Breast epithelium (tissue), 4 donors: ENCODE measurements at regions of chr11 and their contacts with region 1.

Region 1: DNA sequence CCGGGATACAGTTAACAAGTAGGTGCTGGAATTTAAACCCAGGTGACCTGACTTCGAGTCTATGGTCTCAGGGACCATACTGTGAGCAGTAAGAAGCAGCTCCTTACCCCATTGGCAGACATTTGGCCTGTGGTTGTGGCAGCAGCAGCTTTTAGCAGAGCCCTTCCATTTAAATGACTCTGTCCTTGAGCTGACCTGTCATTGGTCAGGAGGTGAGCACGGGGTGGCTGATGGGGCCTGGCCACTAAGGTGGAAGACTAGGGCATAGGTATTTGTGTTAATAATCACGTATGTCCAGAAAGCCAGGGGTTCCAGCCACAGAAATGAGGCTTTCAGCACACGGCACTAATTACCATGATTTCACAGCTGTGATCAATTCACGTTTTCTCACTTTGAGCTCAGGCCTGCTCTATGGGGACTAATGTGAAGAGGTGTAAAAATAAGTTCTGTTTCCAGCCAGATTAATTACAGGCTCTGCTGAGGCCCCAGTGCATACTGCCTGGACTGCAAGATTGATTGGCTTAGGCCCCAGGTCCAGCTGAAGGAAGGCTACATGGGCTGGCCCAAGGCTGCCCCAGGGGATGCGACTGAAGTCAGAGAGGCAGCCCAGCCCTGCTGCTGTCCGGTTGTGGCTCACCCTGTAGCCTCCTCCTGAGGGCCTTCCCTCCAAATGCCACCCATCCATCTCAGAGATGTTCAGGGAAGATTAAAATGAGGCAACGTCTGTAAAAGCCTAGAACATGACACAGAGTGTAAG is 76.0 kb downstream of the FDX1 start:
- DNase-seq: no peak
- H3K4me3 ChIP-seq: no peak overlapping the region
- H3K27ac ChIP-seq: no peak overlapping the region
- H3K4me1 ChIP-seq: no peaks in the 10 kb centered on the region
- H3K27me3 ChIP-seq: no peaks in the 10 kb centered on the region
- CTCF ChIP-seq: no peak
- POLR2A ChIP-seq: no peak

Region 2: GRCh38 chr11:109747839-109748238 is 757.9 kb before region 1 on chr11:
- intact Hi-C with region 1: loop called (anchors 5 kb)
- DNase-seq: no peak
- H3K4me3 ChIP-seq: no peak overlapping the region
- H3K27ac ChIP-seq: no peak overlapping the region
- H3K4me1 ChIP-seq: no peaks in the 10 kb centered on the region
- H3K27me3 ChIP-seq: no peaks in the 10 kb centered on the region
- CTCF ChIP-seq: no peak
- POLR2A ChIP-seq: no peak

Region 3: DNA sequence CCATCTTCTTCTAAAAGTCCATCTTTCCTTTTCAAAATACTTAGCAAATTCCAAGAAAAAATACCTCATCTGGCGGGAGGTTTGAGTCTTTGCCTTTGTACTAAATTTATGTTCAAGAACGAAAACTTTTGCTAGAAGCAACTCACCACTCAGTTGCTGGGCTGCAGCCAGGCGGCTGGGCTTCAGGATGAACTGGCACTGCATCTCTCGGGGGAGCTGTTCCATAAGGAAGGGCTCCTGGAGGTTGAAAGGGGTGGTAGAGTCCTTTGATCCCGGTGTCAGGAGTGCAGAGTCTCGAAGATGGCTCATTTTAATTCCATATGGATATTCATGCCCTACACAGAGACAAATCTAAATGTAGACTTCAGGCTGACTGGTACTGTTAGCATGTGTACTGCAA is 100.7 kb after region 1 on chr11:
- intact Hi-C with region 1: loop called (anchors 10 kb)
- DNase-seq: no peak
- H3K4me3 ChIP-seq: no peak overlapping the region
- H3K27ac ChIP-seq: no peak overlapping the region
- H3K4me1 ChIP-seq: no peaks in the 10 kb centered on the region
- H3K27me3 ChIP-seq: no peaks in the 10 kb centered on the region
- CTCF ChIP-seq: no peak
- POLR2A ChIP-seq: no peak